ENCODE measurements at regions of chr2 and their contacts with region 1.

Region 1: GRCh38 chr2:177740700-177741099 is 331.9 kb downstream of the PDE11A start:
- DNase-seq: no peak
- ATAC-seq: no peak
- H3K4me3 ChIP-seq: no peak overlapping the region
- H3K27ac ChIP-seq: no peak overlapping the region
- H3K4me1 ChIP-seq: peaks cover 0 to 22% of the 10 kb centered on the region in 2 experiments; a peak in 4 of 5 replicates
- H3K27me3 ChIP-seq: no peaks in the 10 kb centered on the region
- CTCF ChIP-seq: no peak
- EP300 ChIP-seq: no peak
- POLR2A ChIP-seq: no peak
- RAD21 ChIP-seq: no peak

Region 2: GRCh38 chr2:177598326-177599138 is 142.2 kb before region 1 on chr2:
- CTCF ChIA-PET with region 1: no interaction called
- POLR2A ChIA-PET with region 1: no interaction called
- in situ Hi-C with region 1: no loop called
- intact Hi-C with region 1: no loop called
- DNase-seq: no peak
- ATAC-seq: no peak
- H3K4me3 ChIP-seq: no peak overlapping the region
- H3K27ac ChIP-seq: no peak overlapping the region
- H3K4me1 ChIP-seq: peaks cover 5% of the 10 kb centered on the region in 2 experiments; a peak in 2 of 5 replicates
- H3K27me3 ChIP-seq: no peaks in the 10 kb centered on the region
- CTCF ChIP-seq: no peak
- EP300 ChIP-seq: no peak
- POLR2A ChIP-seq: no peak
- RAD21 ChIP-seq: no peak

Region 3: DNA sequence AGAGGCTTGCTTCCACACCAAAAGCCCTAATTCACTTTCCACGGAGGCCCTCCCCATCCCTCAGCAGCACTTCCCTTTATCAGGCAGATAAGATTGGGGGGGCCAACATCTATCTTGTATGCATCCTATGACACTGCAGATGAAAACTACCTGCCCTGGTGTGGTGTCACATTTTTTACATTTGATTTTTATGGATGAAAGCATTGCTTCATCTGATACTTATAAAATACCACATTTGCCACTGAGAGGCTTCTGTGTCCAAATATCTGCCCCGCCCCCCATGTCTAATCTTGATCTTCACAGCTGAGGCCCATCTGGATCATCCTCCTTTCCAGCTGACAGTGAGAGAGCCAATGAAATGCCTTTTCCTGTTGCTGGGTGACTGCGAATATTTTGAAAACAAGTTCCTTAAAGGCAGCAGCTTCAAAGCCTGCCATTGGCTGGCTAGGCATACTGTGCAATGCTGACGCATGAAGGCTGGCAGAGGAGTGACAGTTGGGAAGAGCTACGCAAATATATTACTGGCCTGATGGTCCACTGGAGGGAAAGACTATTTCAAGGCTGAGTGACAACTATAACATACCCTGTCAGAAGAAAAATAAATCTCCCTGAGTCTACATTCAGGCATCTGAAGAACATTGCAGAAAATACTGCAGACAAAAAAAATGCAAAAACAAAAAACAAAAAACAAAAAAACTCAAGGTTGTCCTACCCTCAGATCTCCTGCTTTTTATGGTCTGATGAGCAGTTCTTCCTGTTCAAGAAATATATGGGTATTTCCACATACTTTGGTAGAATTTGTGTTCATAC is 13.2 kb after region 1 on chr2:
- CTCF ChIA-PET with region 1: no interaction called
- POLR2A ChIA-PET with region 1: interaction called, 21 read pairs
- in situ Hi-C with region 1: no loop called
- intact Hi-C with region 1: no loop called
- DNase-seq: peak; percentile 54 to 87 (median 66)
- ATAC-seq: peak; percentile 92
- H3K4me3 ChIP-seq: no peak overlapping the region
- H3K27ac ChIP-seq: peak overlapping the region; percentile 36; the same call in 1 of the 3 replicates
- H3K4me1 ChIP-seq: peaks cover 11 to 37% of the 10 kb centered on the region in 2 experiments
- H3K27me3 ChIP-seq: no peaks in the 10 kb centered on the region
- CTCF ChIP-seq: peak in 1 of 3 experiments; percentile 24; a peak in 2 of 6 replicates
- EP300 ChIP-seq: peak; percentile 36
- POLR2A ChIP-seq: no peak
- RAD21 ChIP-seq: peak; percentile 4 to 38; a peak in 2 of 4 replicates

Measured in K562 (cell line).